CD4-positive, alpha-beta memory T cell (primary cell): ENCODE measurements at regions of chr19 and their contacts with region 1.

Region 1: DNA sequence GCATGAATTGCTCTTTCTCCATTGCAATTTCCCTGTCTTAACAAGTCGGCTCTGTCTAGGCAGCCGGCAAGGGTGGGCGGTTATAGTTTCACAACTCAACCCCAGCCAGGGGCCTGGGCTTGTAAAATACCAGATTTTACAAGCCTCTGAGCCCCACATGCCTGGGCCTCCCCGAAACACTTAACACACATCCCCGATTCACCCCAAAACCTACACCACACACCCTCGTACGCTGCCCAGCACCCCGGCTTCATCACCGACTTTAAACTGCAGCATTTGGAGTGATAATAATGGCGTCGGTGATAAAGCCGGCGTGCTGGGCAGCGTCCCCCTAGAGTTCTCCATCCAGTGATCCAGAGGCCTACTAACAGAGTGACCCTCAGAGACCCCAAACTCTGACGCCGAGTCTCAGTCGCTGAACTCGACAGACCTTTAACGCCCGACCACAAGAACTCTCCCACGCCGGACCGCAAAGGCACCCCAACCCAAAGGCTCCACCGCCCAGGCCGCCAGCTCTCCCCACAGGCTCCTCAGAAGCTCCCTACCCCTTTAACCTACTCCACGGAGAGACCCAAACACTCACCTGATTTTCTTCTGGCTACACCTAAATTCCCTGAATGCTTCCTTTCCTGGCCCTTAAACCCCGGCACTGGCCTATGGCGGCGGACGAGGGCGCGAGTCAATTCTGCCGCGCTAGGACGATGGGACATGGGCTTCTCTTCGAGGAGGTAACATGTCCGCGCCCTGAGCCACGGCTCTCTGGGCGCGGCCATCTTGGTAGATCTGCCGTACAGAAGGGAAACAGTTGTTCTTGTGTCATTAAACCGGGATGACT is at the start of gene ZNF649:
- DNase-seq: peak; percentile 72 to 85 (median 79)
- H3K4me3 ChIP-seq: peak within 1 kb of the TSS; percentile 83 to 92
- H3K4me3 Mint-ChIP-seq: peak within 1 kb of the TSS; percentile 97 to 100 (median 99)
- H3K27ac ChIP-seq: peak within 1 kb of the TSS; percentile 77
- H3K27ac Mint-ChIP-seq: peak within 1 kb of the TSS; percentile 84 to 99 (median 96)
- H3K4me1 ChIP-seq: peaks cover 9% of the 10 kb centered on the region
- H3K4me1 Mint-ChIP-seq: peaks cover 13 to 35% (median 21%) of the 10 kb centered on the region in 4 donors
- H3K27me3 ChIP-seq: no peaks in the 10 kb centered on the region
- H3K27me3 Mint-ChIP-seq: peaks cover 9 to 16% of the 10 kb centered on the region in 2 donors
- total RNA-seq, gene ZNF649: 28.6 to 30.8 TPM

Region 2: GRCh38 chr19:51926784-51927742 is 22.5 kb after region 1 on chr19 and contains the start of gene ZNF613:
- CTCF ChIA-PET with region 1: no interaction called
- POLR2A ChIA-PET with region 1: interaction called, 4 read pairs
- intact Hi-C with region 1: loop called (anchors 1 kb)
- DNase-seq: peak; percentile 81 to 89 (median 85)
- H3K4me3 ChIP-seq: peak within 1 kb of the TSS; percentile 85 to 91
- H3K4me3 Mint-ChIP-seq: peak within 1 kb of the TSS; percentile 93 to 99 (median 98)
- H3K27ac ChIP-seq: peak within 1 kb of the TSS; percentile 55
- H3K27ac Mint-ChIP-seq: peak within 1 kb of the TSS; percentile 82 to 97 (median 95)
- H3K4me1 ChIP-seq: peaks cover 11% of the 10 kb centered on the region
- H3K4me1 Mint-ChIP-seq: peaks cover 16 to 38% (median 24%) of the 10 kb centered on the region in 4 donors
- H3K27me3 ChIP-seq: no peaks in the 10 kb centered on the region
- H3K27me3 Mint-ChIP-seq: peaks cover 0 to 2% of the 10 kb centered on the region in 2 donors
- total RNA-seq, gene ZNF613: 8.0 to 8.9 TPM

Region 3: DNA sequence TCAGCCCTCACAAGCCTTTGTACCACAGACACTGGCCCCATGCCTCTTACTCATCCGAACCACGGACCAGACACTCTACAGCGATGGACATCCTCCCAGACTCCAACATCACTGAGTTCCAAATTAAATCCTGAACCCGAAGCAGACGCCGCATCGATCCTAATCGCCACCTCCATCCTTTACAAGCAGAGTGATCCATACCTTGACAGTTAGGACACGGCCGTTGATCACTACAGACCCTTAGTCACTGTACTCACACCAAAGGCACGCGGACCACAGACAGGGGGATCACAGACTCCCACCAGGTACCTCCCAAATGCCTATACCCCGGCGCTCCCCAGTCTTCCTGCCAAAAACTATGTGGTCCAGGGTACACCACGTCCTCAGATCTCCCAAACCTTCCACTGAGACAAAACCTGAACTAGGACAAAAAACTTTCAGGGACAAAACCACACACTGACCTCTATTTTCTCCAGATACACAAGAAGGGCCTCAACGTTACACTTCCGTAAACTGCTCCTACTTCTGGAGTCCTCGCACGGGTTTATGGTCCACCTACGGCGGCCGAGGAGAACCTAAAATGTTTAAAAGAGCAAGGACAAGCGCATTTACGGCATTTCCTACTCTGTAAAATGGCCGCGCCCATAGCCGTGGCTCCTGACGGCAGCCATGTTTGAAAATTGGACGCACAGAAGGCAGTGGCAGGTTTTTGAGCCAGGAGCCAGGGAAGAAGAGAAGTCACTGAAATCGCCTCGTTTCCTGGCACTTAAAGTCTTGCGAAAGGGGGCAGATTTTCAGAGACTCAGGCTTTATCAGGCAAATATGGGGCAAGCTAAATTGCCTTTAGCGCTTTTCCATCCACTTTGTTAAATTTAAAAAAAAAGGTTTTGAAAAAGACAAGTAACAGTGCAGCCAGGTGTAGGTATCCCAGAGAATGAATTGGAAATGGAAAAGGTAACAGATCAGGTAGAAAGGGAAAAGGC is 82.1 kb after region 1 on chr19 and contains the start of gene ZNF350:
- CTCF ChIA-PET with region 1: no interaction called
- POLR2A ChIA-PET with region 1: interaction called, 3 read pairs
- intact Hi-C with region 1: loop called (anchors 1 kb)
- DNase-seq: peak; percentile 88 to 96 (median 89)
- H3K4me3 ChIP-seq: peak within 1 kb of the TSS; percentile 57 to 98
- H3K4me3 Mint-ChIP-seq: peak within 1 kb of the TSS; percentile 94 to 100 (median 98)
- H3K27ac ChIP-seq: peak within 1 kb of the TSS; percentile 74
- H3K27ac Mint-ChIP-seq: peak within 1 kb of the TSS; percentile 81 to 98 (median 94)
- H3K4me1 ChIP-seq: peaks cover 11% of the 10 kb centered on the region
- H3K4me1 Mint-ChIP-seq: peaks cover 9 to 32% (median 12%) of the 10 kb centered on the region in 4 donors
- H3K27me3 ChIP-seq: no peaks in the 10 kb centered on the region
- H3K27me3 Mint-ChIP-seq: no peaks in the 10 kb centered on the region
- total RNA-seq, gene ZNF350: 37.0 to 38.9 TPM

Region 4: DNA sequence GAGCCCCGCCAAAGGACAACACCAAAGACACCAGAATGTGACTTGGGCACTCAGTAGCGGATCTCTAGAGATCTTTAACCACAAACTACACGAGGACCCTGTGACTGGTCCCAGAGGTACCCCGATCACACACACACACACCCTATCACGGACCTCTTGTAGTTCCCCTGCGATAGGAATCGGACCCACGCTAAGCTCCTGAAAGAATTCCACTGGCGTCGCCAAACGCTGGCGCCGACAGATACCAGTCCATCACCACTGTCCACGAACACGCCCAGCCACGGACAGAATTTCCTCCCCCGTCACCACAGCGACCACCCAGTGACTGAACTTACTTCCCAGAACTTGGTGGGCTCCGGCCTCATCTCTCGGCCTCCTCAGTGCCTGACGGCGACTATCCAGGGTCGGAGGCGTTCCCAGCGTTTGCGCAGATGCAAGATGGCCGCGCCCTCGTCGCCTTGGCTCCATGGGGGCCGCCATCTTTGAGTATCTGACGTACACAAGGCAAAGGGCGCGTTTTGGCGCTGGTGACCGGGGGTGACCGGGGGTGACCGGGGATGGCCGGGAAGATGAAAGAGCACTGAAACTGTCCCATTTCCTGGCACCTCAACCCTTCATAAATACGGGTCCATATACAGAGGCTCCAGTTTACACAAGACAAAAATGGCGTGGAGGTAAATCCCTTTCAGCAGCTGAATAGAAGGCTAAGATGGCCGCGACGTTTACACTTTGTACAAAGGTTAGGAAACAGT is 103.4 kb after region 1 on chr19 and contains the start of gene ZNF615:
- CTCF ChIA-PET with region 1: no interaction called
- POLR2A ChIA-PET with region 1: no interaction called
- intact Hi-C with region 1: loop called (anchors 1 kb)
- DNase-seq: peak; percentile 83 to 92 (median 85)
- H3K4me3 ChIP-seq: peak within 1 kb of the TSS; percentile 67 to 85
- H3K4me3 Mint-ChIP-seq: peak within 1 kb of the TSS; percentile 94 to 98 (median 98)
- H3K27ac ChIP-seq: peak within 1 kb of the TSS; percentile 78
- H3K27ac Mint-ChIP-seq: peak within 1 kb of the TSS; percentile 86 to 99 (median 98)
- H3K4me1 ChIP-seq: peaks cover 8% of the 10 kb centered on the region
- H3K4me1 Mint-ChIP-seq: peaks cover 14 to 17% (median 16%) of the 10 kb centered on the region in 4 donors
- H3K27me3 ChIP-seq: no peaks in the 10 kb centered on the region
- H3K27me3 Mint-ChIP-seq: no peaks in the 10 kb centered on the region
- total RNA-seq, gene ZNF615: 21.5 to 22.4 TPM

Region 5: DNA sequence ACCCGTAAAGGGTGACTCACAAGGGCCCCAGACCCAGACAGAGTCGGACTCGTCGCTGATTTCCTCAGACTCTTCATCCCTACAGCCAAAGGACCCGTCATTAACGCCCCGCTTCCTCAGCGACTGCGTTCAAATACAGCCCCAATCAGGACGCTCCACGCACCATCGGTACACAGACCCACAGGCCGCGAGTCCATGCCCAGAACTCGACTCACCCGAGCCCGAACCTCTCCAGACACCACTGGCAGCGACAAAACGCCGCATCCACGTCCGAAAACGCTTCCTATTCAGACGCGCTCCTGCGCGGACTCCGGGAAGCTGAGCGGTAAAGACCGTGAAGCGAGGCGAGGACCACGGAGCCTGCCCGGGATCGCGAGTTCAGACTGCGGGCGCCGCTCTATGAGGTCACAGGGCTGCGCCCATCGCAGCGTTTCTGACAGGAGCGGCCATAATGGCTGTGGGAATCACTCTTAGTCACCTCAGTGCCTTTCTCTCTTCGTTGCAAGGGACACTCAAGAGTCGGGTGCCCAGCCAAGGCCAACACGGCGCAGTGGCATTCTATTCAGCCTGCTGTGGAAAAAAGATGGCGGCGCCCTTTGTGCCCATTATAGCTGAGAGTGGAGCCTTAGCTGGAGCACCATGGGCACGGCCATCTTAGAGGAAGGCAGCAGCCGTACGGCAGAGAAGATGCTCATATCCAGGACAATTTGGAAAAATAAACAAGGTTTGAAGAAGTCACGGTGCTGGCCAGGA is 123.7 kb after region 1 on chr19 and contains the start of gene ZNF614:
- CTCF ChIA-PET with region 1: no interaction called
- POLR2A ChIA-PET with region 1: no interaction called
- intact Hi-C with region 1: loop called (anchors 2 kb)
- DNase-seq: peak; percentile 85 to 93 (median 89)
- H3K4me3 ChIP-seq: peak within 1 kb of the TSS; percentile 77 to 96
- H3K4me3 Mint-ChIP-seq: peak within 1 kb of the TSS; percentile 90 to 99 (median 94)
- H3K27ac ChIP-seq: peak within 1 kb of the TSS; percentile 89
- H3K27ac Mint-ChIP-seq: peak within 1 kb of the TSS; percentile 91 to 99 (median 96)
- H3K4me1 ChIP-seq: peaks cover 18% of the 10 kb centered on the region
- H3K4me1 Mint-ChIP-seq: peaks cover 16 to 33% (median 23%) of the 10 kb centered on the region in 4 donors
- H3K27me3 ChIP-seq: no peaks in the 10 kb centered on the region
- H3K27me3 Mint-ChIP-seq: no peaks in the 10 kb centered on the region
- total RNA-seq, gene ZNF614: 12.3 TPM